ENCODE measurements at regions of chr1 and their contacts with region 1.

Region 1: GRCh38 chr1:54800899-54801759 is at the start of gene TTC22:
- DNase-seq: peak in 3 of 5 donors; percentile 34 to 57 (median 44)
- H3K4me3 ChIP-seq: peak within 1 kb of the TSS; percentile 38
- H3K27ac ChIP-seq: no peak within 1 kb of the TSS
- H3K4me1 ChIP-seq: no peaks in the 10 kb centered on the region
- H3K27me3 ChIP-seq: no peaks in the 10 kb centered on the region
- CTCF ChIP-seq: no peak
- EP300 ChIP-seq: no peak
- POLR2A ChIP-seq: no peak
- total RNA-seq, gene TTC22: 0.13 to 9.1 (median 1.1) TPM

Region 2: GRCh38 chr1:53851571-53852285 is 949.4 kb before region 1 on chr1:
- intact Hi-C with region 1: loop called in 1 of 4 experiments (anchors 10 kb)
- DNase-seq: no peak
- H3K4me3 ChIP-seq: no peak overlapping the region
- H3K27ac ChIP-seq: no peak overlapping the region
- H3K4me1 ChIP-seq: no peaks in the 10 kb centered on the region
- H3K27me3 ChIP-seq: no peaks in the 10 kb centered on the region
- CTCF ChIP-seq: no peak
- EP300 ChIP-seq: no peak
- POLR2A ChIP-seq: no peak

Region 3: GRCh38 chr1:53860967-53861411 is 940.1 kb before region 1 on chr1:
- intact Hi-C with region 1: loop called in 2 of 4 experiments (anchors 10 kb)
- DNase-seq: peak in 3 of 5 donors; percentile 26 to 37 (median 35)
- H3K4me3 ChIP-seq: no peak overlapping the region
- H3K27ac ChIP-seq: no peak overlapping the region
- H3K4me1 ChIP-seq: no peaks in the 10 kb centered on the region
- H3K27me3 ChIP-seq: no peaks in the 10 kb centered on the region
- CTCF ChIP-seq: peak; percentile 44 to 53 (median 49)
- EP300 ChIP-seq: no peak
- POLR2A ChIP-seq: no peak

Region 4: DNA sequence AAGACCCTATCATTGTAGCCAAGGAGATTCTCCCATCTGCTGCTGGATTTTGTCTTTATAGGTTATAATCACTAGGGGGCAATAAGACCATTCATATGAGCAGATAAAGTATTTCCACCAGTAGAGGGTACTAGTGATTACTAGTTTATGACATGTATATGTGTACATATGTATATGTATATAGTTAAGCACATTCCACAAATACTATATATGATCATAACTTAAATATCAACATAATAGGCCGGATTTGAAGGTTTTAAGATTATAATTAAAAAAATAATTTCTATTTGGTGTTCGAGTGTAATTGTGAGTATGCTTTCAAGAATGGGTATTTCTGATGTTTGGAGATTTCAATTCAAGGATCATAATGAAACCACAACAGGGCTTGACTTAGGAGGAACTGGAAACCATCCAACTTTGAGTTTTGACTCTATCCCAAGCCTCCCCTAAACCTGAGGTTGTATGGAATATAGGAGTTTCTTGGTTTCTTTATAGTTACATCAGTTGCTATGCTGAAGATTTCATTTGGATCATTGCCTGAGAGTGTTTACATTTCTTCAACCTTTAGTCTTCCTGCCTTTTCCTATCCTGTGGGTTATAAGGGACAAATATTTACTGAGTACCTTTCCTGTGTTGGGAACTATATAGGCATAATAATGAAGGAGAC is 730.8 kb before region 1 on chr1:
- intact Hi-C with region 1: loop called in 3 of 4 experiments (anchors 10 kb)
- DNase-seq: no peak
- H3K4me3 ChIP-seq: no peak overlapping the region
- H3K27ac ChIP-seq: no peak overlapping the region
- H3K4me1 ChIP-seq: peaks cover 1% of the 10 kb centered on the region
- H3K27me3 ChIP-seq: no peaks in the 10 kb centered on the region
- CTCF ChIP-seq: peak; percentile 45 to 89 (median 73)
- EP300 ChIP-seq: no peak
- POLR2A ChIP-seq: no peak

Region 5: GRCh38 chr1:54754045-54754444 is 47.1 kb before region 1 on chr1:
- intact Hi-C with region 1: no loop called
- DNase-seq: no peak
- H3K4me3 ChIP-seq: no peak overlapping the region
- H3K27ac ChIP-seq: no peak overlapping the region
- H3K4me1 ChIP-seq: no peaks in the 10 kb centered on the region
- H3K27me3 ChIP-seq: no peaks in the 10 kb centered on the region
- CTCF ChIP-seq: no peak
- EP300 ChIP-seq: no peak
- POLR2A ChIP-seq: no peak

Region 6: GRCh38 chr1:54872036-54872331 is 70.9 kb after region 1 on chr1:
- intact Hi-C with region 1: no loop called
- DNase-seq: no peak
- H3K4me3 ChIP-seq: no peak overlapping the region
- H3K27ac ChIP-seq: no peak overlapping the region
- H3K4me1 ChIP-seq: no peaks in the 10 kb centered on the region
- H3K27me3 ChIP-seq: no peaks in the 10 kb centered on the region
- CTCF ChIP-seq: no peak
- EP300 ChIP-seq: no peak
- POLR2A ChIP-seq: no peak

Region 7: GRCh38 chr1:54944610-54945544 is 143.7 kb after region 1 on chr1:
- intact Hi-C with region 1: no loop called
- DNase-seq: peak; percentile 34 to 74 (median 46)
- H3K4me3 ChIP-seq: no peak overlapping the region
- H3K27ac ChIP-seq: no peak overlapping the region
- H3K4me1 ChIP-seq: no peaks in the 10 kb centered on the region
- H3K27me3 ChIP-seq: no peaks in the 10 kb centered on the region
- CTCF ChIP-seq: peak in 2 of 3 donors; percentile 24 to 35
- EP300 ChIP-seq: no peak
- POLR2A ChIP-seq: no peak

Region 8: DNA sequence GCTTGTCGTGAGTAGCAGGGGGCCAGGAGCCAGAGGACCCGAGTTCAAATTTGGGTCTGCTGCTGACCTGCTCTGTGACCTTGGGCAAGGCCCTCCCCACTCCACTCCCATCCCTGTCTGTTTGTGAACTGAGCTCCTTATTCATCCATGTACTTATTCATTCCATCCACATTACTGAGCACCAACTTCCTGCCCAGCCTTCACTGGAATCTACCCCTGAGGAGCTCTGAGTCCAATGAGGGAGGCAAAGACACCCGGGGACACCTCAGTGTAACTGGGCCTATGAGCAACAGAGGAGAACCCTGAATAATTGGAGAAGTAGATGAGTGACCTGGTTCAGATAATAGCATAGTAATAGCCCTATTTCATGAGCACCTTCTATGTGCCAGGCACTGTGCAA is 206.5 kb after region 1 on chr1:
- intact Hi-C with region 1: no loop called
- DNase-seq: no peak
- H3K4me3 ChIP-seq: no peak overlapping the region
- H3K27ac ChIP-seq: no peak overlapping the region
- H3K4me1 ChIP-seq: no peaks in the 10 kb centered on the region
- H3K27me3 ChIP-seq: no peaks in the 10 kb centered on the region
- CTCF ChIP-seq: no peak
- EP300 ChIP-seq: no peak
- POLR2A ChIP-seq: no peak